Sigmoid colon (tissue), 7 donors: ENCODE measurements at regions of chrX and their contacts with region 1.

Region 1: GRCh38 chrX:135015523-135016245 is 6.7 kb downstream of the RTL8B start:
- DNase-seq: no peak
- H3K4me3 ChIP-seq: no peak overlapping the region
- H3K27ac ChIP-seq: no peak overlapping the region
- H3K4me1 ChIP-seq: peaks cover 0 to 4% (median 0%) of the 10 kb centered on the region in 4 donors
- H3K27me3 ChIP-seq: no peaks in the 10 kb centered on the region
- CTCF ChIP-seq: no peak
- EP300 ChIP-seq: no peak
- POLR2A ChIP-seq: no peak

Region 2: GRCh38 chrX:135003876-135004623 is 11.6 kb before region 1 on chrX:
- intact Hi-C with region 1: loop called (anchors 2 kb)
- DNase-seq: peak; percentile 94
- H3K4me3 ChIP-seq: peak overlapping the region in 3 of 4 donors; percentile 35 to 47 (median 46)
- H3K27ac ChIP-seq: peak overlapping the region; percentile 53 to 62 (median 60)
- H3K4me1 ChIP-seq: no peaks in the 10 kb centered on the region
- H3K27me3 ChIP-seq: no peaks in the 10 kb centered on the region
- CTCF ChIP-seq: no peak
- EP300 ChIP-seq: no peak
- POLR2A ChIP-seq: no peak